Activated CD4-positive, alpha-beta T cell treated with anti-CD3 and anti-CD28 coated beads, Interleukin-2, amount 10 ng/mL, durations not matched to agents 24 days and 14 days (primary cell): ENCODE measurements at regions of chr12 and their contacts with region 1.

Region 1: DNA sequence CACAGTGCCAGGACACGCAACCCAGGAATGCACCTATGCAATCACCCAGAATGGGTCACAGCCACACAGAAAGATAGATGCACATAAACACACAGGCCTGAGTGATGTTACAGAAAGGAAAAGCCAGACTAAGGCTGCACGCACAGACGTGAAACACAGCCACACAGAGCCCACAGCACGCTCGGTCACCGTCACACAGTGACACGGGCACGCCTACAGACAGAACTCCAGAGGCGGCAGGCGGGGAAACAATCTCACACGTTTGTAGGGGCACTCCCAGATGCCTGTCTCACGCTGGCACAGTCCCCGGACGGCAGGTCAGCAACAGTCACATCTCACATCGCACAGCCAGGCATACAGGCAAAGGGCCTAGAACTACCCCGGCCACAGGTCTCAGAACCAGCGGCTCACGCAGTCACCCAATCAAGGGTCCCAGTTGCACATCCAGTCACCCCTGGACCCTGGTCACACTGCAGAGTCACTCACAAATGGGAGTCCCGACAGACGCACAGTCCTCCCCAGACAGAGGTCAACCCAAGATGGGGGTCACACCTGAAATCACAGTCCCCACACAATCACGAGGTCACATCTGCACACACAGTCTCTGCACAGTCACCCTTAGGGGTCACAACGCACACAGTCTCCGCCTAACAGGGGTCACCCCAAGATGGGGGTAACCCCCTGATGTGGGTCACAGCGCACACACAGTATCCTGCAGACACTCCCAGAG is 790 bp downstream of the SSH1 start:
- DNase-seq: peak; percentile 84
- H3K4me3 Mint-ChIP-seq: peak overlapping the region; percentile 91
- H3K27ac Mint-ChIP-seq: peak overlapping the region; percentile 84
- H3K4me1 Mint-ChIP-seq: peaks cover 43% of the 10 kb centered on the region
- H3K27me3 Mint-ChIP-seq: peaks cover 1% of the 10 kb centered on the region

Region 2: GRCh38 chr12:108803428-108804105 is 53.0 kb before region 1 on chr12:
- intact Hi-C with region 1: no loop called
- DNase-seq: peak; percentile 92
- H3K4me3 Mint-ChIP-seq: no peak overlapping the region
- H3K27ac Mint-ChIP-seq: peak overlapping the region; percentile 78
- H3K4me1 Mint-ChIP-seq: peaks cover 10% of the 10 kb centered on the region
- H3K27me3 Mint-ChIP-seq: no peaks in the 10 kb centered on the region

Region 3: DNA sequence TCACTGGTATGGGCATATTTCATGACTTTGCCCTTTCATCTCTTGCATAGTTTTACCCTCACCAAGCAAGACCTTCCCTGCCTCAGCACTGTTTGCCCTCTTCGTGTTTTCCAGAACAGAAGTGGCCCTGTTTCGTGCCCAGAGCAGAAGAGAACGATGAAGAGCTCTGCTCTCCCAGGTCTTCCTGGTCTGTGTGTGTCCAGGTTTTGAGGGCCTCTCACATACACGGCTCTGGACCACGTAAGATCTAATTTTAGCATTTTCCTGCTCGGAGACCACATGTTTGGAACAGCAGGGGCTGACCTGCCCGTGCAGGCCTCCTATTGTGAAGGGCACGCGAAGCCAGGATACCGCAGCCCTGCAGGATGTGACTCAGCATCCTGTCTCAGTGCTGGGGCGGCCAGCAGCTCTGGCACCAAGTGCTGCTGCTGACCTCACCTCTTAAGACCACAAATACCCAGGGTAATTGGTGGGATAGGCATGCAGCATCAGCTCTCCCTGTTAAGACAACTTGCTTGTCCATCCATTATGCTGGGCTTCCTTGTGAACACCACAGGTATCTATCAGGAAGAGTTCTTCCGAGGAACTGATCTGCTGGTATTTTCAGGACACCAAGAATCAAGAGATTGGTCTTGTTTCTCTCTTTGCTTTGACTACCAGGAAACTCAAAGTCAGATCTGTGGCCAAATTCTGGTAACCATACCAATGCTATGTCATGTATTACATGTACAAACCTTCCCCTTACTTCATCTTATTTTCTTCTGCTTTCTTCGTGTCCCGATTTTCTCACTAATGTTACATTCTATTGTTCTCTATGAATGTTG is 18.2 kb before region 1 on chr12:
- intact Hi-C with region 1: loop called (anchors 1 kb)
- DNase-seq: peak; percentile 91
- H3K4me3 Mint-ChIP-seq: peak overlapping the region; percentile 74
- H3K27ac Mint-ChIP-seq: peak overlapping the region; percentile 95
- H3K4me1 Mint-ChIP-seq: peaks cover 47% of the 10 kb centered on the region
- H3K27me3 Mint-ChIP-seq: no peaks in the 10 kb centered on the region

Region 4: GRCh38 chr12:109018296-109018695 is 161.7 kb after region 1 on chr12:
- intact Hi-C with region 1: no loop called
- DNase-seq: no peak
- H3K4me3 Mint-ChIP-seq: no peak overlapping the region
- H3K27ac Mint-ChIP-seq: no peak overlapping the region
- H3K4me1 Mint-ChIP-seq: peaks cover 3% of the 10 kb centered on the region
- H3K27me3 Mint-ChIP-seq: peaks cover 18% of the 10 kb centered on the region

Region 5: GRCh38 chr12:109052414-109053323 is 196.1 kb after region 1 on chr12 and contains the start of gene USP30:
- intact Hi-C with region 1: loop called (anchors 2 kb)
- DNase-seq: peak; percentile 95
- H3K4me3 Mint-ChIP-seq: peak within 1 kb of the TSS; percentile 86
- H3K27ac Mint-ChIP-seq: peak within 1 kb of the TSS; percentile 95
- H3K4me1 Mint-ChIP-seq: peaks cover 8% of the 10 kb centered on the region
- H3K27me3 Mint-ChIP-seq: no peaks in the 10 kb centered on the region
- total RNA-seq, gene USP30: 6.6 and 6.9 TPM in 2 replicates